ENCODE measurements at regions of chr10 and their contacts with region 1.

Region 1: GRCh38 chr10:75401569-75402485 is at the start of gene ZNF503:
- DNase-seq: peak; percentile 98 to 99
- H3K4me3 ChIP-seq: peak within 1 kb of the TSS; percentile 99
- H3K4me3 Mint-ChIP-seq: peak within 1 kb of the TSS; percentile 94
- H3K27ac Mint-ChIP-seq: peak within 1 kb of the TSS; percentile 95
- H3K4me1 ChIP-seq: peaks cover 9% of the 10 kb centered on the region
- H3K4me1 Mint-ChIP-seq: peaks cover 7% of the 10 kb centered on the region
- H3K27me3 ChIP-seq: no peaks in the 10 kb centered on the region
- H3K27me3 Mint-ChIP-seq: no peaks in the 10 kb centered on the region
- CTCF ChIP-seq: no peak
- total RNA-seq, gene ZNF503: 35.5 and 35.7 TPM in 2 replicates

Region 2: GRCh38 chr10:75497997-75498883 is 96.4 kb after region 1 on chr10:
- CTCF ChIA-PET with region 1: no interaction called
- POLR2A ChIA-PET with region 1: interaction called, 4 read pairs
- intact Hi-C with region 1: loop called (anchors 2 kb)
- DNase-seq: peak; percentile 57 to 58
- H3K4me3 ChIP-seq: no peak overlapping the region
- H3K4me3 Mint-ChIP-seq: peak overlapping the region; percentile 7
- H3K27ac Mint-ChIP-seq: peak overlapping the region; percentile 1
- H3K4me1 ChIP-seq: peaks cover 51% of the 10 kb centered on the region
- H3K4me1 Mint-ChIP-seq: peaks cover 46% of the 10 kb centered on the region
- H3K27me3 ChIP-seq: no peaks in the 10 kb centered on the region
- H3K27me3 Mint-ChIP-seq: no peaks in the 10 kb centered on the region
- CTCF ChIP-seq: no peak

Region 3: GRCh38 chr10:75582102-75582501 is 180.3 kb after region 1 on chr10:
- CTCF ChIA-PET with region 1: no interaction called
- POLR2A ChIA-PET with region 1: no interaction called
- intact Hi-C with region 1: no loop called
- DNase-seq: peak in 1 of 2 experiments; percentile 15
- H3K4me3 ChIP-seq: no peak overlapping the region
- H3K4me3 Mint-ChIP-seq: no peak overlapping the region
- H3K27ac Mint-ChIP-seq: no peak overlapping the region
- H3K4me1 ChIP-seq: no peaks in the 10 kb centered on the region
- H3K4me1 Mint-ChIP-seq: no peaks in the 10 kb centered on the region
- H3K27me3 ChIP-seq: no peaks in the 10 kb centered on the region
- H3K27me3 Mint-ChIP-seq: no peaks in the 10 kb centered on the region
- CTCF ChIP-seq: no peak

Region 4: GRCh38 chr10:75651417-75651816 is 249.6 kb after region 1 on chr10:
- CTCF ChIA-PET with region 1: interaction called, 3 read pairs
- POLR2A ChIA-PET with region 1: no interaction called
- intact Hi-C with region 1: loop called (anchors 1 kb)
- DNase-seq: peak in 1 of 2 experiments; percentile 27
- H3K4me3 ChIP-seq: no peak overlapping the region
- H3K4me3 Mint-ChIP-seq: no peak overlapping the region
- H3K27ac Mint-ChIP-seq: no peak overlapping the region
- H3K4me1 ChIP-seq: peaks cover 10% of the 10 kb centered on the region
- H3K4me1 Mint-ChIP-seq: peaks cover 21% of the 10 kb centered on the region
- H3K27me3 ChIP-seq: no peaks in the 10 kb centered on the region
- H3K27me3 Mint-ChIP-seq: no peaks in the 10 kb centered on the region
- CTCF ChIP-seq: peak in 1 of 2 experiments; percentile 22

Region 5: GRCh38 chr10:75910032-75910431 is 508.2 kb after region 1 on chr10:
- CTCF ChIA-PET with region 1: interaction called, 4 read pairs
- POLR2A ChIA-PET with region 1: no interaction called
- intact Hi-C with region 1: loop called (anchors 2 kb)
- DNase-seq: no peak
- H3K4me3 ChIP-seq: no peak overlapping the region
- H3K4me3 Mint-ChIP-seq: no peak overlapping the region
- H3K27ac Mint-ChIP-seq: no peak overlapping the region
- H3K4me1 ChIP-seq: no peaks in the 10 kb centered on the region
- H3K4me1 Mint-ChIP-seq: peaks cover 7% of the 10 kb centered on the region
- H3K27me3 ChIP-seq: no peaks in the 10 kb centered on the region
- H3K27me3 Mint-ChIP-seq: no peaks in the 10 kb centered on the region
- CTCF ChIP-seq: peak; percentile 48 to 56

Region 6: GRCh38 chr10:76086761-76087639 is 685.2 kb after region 1 on chr10:
- CTCF ChIA-PET with region 1: no interaction called
- POLR2A ChIA-PET with region 1: no interaction called
- intact Hi-C with region 1: loop called (anchors 2 kb)
- DNase-seq: peak; percentile 68 to 74
- H3K4me3 ChIP-seq: no peak overlapping the region
- H3K4me3 Mint-ChIP-seq: no peak overlapping the region
- H3K27ac Mint-ChIP-seq: peak overlapping the region; percentile 34
- H3K4me1 ChIP-seq: peaks cover 15% of the 10 kb centered on the region
- H3K4me1 Mint-ChIP-seq: peaks cover 6% of the 10 kb centered on the region
- H3K27me3 ChIP-seq: no peaks in the 10 kb centered on the region
- H3K27me3 Mint-ChIP-seq: no peaks in the 10 kb centered on the region
- CTCF ChIP-seq: peak; percentile 72 to 79

Region 7: GRCh38 chr10:76303682-76304316 is 902.0 kb after region 1 on chr10:
- CTCF ChIA-PET with region 1: interaction called, 3 read pairs
- POLR2A ChIA-PET with region 1: interaction called, 16 read pairs
- intact Hi-C with region 1: loop called (anchors 1 kb)
- DNase-seq: peak; percentile 84 to 85
- H3K4me3 ChIP-seq: no peak overlapping the region
- H3K4me3 Mint-ChIP-seq: peak overlapping the region; percentile 26
- H3K27ac Mint-ChIP-seq: peak overlapping the region; percentile 86
- H3K4me1 ChIP-seq: peaks cover 62% of the 10 kb centered on the region
- H3K4me1 Mint-ChIP-seq: peaks cover 52% of the 10 kb centered on the region
- H3K27me3 ChIP-seq: no peaks in the 10 kb centered on the region
- H3K27me3 Mint-ChIP-seq: no peaks in the 10 kb centered on the region
- CTCF ChIP-seq: peak; percentile 56 to 72

Measured in Caco-2 (cell line).